ENCODE measurements at regions of chr19 and their contacts with region 1.

Region 1: DNA sequence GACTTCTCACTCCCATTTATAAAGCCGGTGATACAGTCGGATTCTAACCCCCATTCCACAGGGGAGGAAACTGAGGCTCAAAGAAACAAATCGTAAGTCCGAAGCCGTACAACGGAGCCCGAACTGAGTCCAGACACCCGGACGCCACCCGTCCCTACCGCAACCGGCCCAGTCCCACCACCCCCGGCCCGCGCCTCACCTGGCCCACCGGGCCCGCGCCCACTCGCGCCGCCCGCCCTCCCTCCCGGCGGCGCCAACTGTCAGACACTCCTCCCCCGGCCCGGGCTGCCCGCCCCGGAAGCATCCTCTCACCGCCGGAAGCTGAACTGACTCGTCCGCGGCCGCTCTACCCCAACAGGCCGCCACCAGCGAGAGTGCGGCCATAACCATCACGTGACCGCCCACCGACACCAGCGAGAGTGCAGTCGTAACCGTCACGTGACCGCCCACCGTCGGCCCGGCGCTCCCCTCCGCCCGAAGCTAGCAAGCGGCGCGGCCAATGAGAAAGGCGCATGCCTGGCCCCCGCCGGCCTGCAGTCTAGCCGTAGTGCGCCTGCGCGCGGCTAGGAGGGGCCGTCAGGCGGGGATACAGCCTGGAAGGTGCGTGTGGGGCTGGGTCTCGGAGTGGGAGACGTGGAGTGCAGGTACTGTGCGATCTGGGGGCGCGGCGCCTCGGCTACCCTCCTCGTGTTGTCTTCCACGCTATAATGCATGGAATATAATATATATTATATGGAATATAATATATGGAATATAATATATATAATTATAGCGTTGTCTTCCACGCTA is at the starts of genes C19orf47 and PLD3:
- DNase-seq: peak; percentile 99
- H3K4me3 Mint-ChIP-seq: peak within 1 kb of the TSS; percentile 89
- H3K27ac Mint-ChIP-seq: peak within 1 kb of the TSS; percentile 78
- H3K4me1 Mint-ChIP-seq: peaks cover 29% of the 10 kb centered on the region
- H3K27me3 Mint-ChIP-seq: no peaks in the 10 kb centered on the region
- total RNA-seq, gene C19orf47: 13.5 to 14.6 TPM
- total RNA-seq, gene PLD3: 57.6 to 58.2 TPM

Region 2: GRCh38 chr19:40229484-40229883 is 118.8 kb before region 1 on chr19:
- CTCF ChIA-PET with region 1: no interaction called
- intact Hi-C with region 1: loop called (anchors 2 kb)
- DNase-seq: peak; percentile 61
- H3K4me3 Mint-ChIP-seq: no peak overlapping the region
- H3K27ac Mint-ChIP-seq: peak overlapping the region; percentile 67
- H3K4me1 Mint-ChIP-seq: peaks cover 32% of the 10 kb centered on the region
- H3K27me3 Mint-ChIP-seq: peaks cover 31% of the 10 kb centered on the region

Region 3: GRCh38 chr19:40331069-40331468 is 17.2 kb before region 1 on chr19:
- CTCF ChIA-PET with region 1: no interaction called
- intact Hi-C with region 1: no loop called
- DNase-seq: no peak
- H3K4me3 Mint-ChIP-seq: no peak overlapping the region
- H3K27ac Mint-ChIP-seq: no peak overlapping the region
- H3K4me1 Mint-ChIP-seq: no peaks in the 10 kb centered on the region
- H3K27me3 Mint-ChIP-seq: no peaks in the 10 kb centered on the region

Region 4: GRCh38 chr19:40403262-40403984 is 55.1 kb after region 1 on chr19:
- CTCF ChIA-PET with region 1: no interaction called
- intact Hi-C with region 1: loop called (anchors 1 kb)
- DNase-seq: peak; percentile 91
- H3K4me3 Mint-ChIP-seq: peak overlapping the region; percentile 83
- H3K27ac Mint-ChIP-seq: peak overlapping the region; percentile 65
- H3K4me1 Mint-ChIP-seq: peaks cover 13% of the 10 kb centered on the region
- H3K27me3 Mint-ChIP-seq: no peaks in the 10 kb centered on the region

Region 5: DNA sequence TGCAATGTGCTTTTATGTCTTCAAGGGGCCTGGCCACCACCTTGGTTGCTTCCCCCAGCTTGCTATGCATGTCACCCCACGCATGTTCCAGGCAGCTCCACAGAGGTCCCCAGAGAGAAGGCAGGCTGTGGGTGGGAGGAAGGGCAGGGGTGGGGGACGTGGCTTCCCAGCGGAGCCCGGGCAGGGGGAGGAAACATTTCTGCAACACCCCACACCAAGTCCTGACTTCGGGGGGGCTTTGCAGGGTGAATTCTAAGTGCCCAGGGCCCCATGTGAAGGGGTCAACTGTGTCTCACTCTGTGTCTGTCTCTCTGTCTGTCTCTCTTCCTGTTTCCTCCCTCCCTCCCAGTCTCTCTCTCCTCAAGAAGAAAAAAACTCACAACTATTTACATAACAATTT is 292.4 kb after region 1 on chr19:
- CTCF ChIA-PET with region 1: no interaction called
- intact Hi-C with region 1: no loop called
- DNase-seq: no peak
- H3K4me3 Mint-ChIP-seq: no peak overlapping the region
- H3K27ac Mint-ChIP-seq: no peak overlapping the region
- H3K4me1 Mint-ChIP-seq: peaks cover 13% of the 10 kb centered on the region
- H3K27me3 Mint-ChIP-seq: no peaks in the 10 kb centered on the region

Region 6: DNA sequence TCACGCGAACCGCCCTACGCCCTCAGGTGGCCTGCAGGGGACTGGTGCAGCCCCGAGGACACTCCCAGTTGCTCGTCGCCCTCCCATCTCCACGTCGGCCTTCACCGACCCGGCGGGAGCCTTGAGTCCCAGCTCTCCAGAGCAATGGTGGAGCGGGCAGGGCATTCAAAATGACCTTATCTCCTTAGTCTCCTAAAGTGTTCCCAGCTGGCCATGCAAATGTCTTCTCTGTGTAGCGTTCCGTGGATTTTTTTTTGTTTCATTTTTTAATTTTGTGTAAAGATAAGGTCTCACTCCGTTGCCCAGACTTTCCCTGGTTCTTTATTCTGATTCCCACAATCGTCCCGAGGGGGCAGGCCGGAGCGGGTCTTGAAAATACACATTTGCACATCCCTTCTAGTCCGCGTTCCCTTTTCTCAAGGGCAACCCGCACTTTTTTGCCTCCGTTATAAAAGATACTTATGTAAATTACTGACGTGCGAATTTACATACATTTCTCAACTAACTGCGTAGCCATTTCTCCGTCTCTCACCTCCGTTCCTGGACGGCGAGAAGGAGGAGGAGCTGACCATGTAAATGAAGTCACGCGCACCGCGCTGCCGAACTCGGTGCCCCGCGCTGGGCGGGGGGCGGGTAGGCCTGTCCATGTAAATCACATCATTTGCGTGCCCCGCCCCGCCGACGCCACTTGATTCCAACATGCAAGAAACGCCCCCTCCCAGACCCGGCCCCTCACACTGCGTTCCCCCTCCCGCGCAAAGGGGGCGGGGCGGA is 450.1 kb after region 1 on chr19:
- CTCF ChIA-PET with region 1: no interaction called
- intact Hi-C with region 1: loop called (anchors 5 kb)
- DNase-seq: peak; percentile 100
- H3K4me3 Mint-ChIP-seq: peak overlapping the region; percentile 92
- H3K27ac Mint-ChIP-seq: peak overlapping the region; percentile 97
- H3K4me1 Mint-ChIP-seq: peaks cover 49% of the 10 kb centered on the region
- H3K27me3 Mint-ChIP-seq: no peaks in the 10 kb centered on the region

Measured in activated naive CD4-positive, alpha-beta T cell treated with anti-CD3 and anti-CD28 coated beads for 36 hours (primary cell).